ENCODE measurements at regions of chr3 and their contacts with region 1.

Region 1: GRCh38 chr3:123652346-123652984 is 67.6 kb upstream of the HACD2 start:
- DNase-seq: peak; percentile 88

Region 2: GRCh38 chr3:123602325-123602724 is 50.1 kb before region 1 on chr3:
- intact Hi-C with region 1: no loop called
- DNase-seq: no peak

Region 3: DNA sequence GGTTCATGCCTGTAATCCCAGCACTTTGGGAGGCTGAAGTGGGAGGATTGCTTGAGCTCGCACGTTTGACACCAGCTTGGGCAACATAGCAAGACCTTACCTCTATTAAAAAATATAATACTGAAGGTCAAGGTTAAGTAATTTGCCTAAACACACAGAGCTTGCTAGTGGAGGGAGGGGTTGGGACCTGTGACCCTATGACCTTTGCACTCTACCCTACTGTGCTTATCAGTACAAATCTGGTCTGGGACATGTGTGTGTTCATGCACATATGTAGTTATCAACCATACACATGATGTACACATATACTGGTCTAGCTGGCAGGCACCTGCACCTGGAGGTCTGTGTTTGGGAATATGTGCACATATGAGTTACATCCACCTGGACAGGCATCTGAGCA is 50.3 kb after region 1 on chr3:
- intact Hi-C with region 1: loop called (anchors 1 kb)
- DNase-seq: no peak

Region 4: DNA sequence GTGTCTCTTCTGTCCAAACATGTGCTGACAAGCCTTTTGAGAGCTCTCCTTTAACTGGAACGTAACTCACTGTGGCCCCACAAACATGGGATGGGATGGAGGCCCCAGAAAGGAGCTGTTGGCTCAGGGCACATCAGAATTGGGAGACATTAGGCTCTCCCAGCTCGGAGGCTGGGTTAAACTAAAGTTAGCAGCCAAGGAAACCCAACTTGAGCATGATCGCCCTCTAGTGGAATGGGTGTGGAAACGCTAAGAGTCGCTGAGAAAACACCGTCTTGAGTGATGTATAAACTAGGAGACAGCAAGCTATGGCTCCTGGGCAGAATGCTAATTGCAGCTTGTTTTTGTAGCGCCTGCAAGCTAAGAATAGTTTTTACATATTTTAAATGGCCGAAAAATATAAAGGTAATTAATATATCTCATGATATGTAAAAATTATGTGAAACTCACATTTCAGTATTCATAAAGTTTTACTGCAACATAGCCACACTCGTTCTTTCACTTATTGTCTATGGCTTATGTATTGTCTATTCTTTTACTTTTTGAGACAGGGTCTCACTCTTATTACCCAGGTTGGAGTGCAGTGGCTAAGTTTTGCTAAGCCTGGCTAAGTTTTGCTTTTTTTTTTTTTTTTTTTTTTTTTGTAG is 71.2 kb after region 1 on chr3:
- intact Hi-C with region 1: loop called (anchors 1 kb)
- DNase-seq: no peak

Region 5: DNA sequence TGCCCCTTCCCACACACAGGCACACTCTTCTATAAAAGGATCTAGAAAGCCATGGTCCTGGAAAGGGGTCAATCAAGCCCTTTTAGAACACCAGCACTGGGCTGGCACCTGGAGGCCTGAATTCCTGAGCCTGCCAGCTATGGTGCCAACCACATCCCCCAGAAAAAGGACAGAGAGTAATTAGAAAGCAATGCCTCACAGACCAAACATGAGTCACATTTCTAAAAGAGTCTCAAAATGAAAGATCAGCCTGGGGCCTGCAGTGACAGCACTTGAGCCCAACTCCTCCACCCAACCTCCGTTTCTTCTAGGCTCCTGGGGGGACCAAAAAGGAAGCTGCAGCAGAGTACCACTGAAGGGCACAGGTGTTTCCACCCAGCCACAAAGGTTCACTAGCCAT is 217.6 kb after region 1 on chr3:
- intact Hi-C with region 1: no loop called
- DNase-seq: no peak

Measured in cardiac septum (tissue), 1 donor.